Natural killer cell (primary cell): ENCODE measurements at regions of chr3 and their contacts with region 1.

Region 1: GRCh38 chr3:73907582-73907981 is 282.8 kb upstream of the PDZRN3 start:
- DNase-seq: no peak
- ATAC-seq: no peak
- H3K4me3 ChIP-seq: no peak overlapping the region
- H3K4me3 Mint-ChIP-seq: no peak overlapping the region
- H3K27ac ChIP-seq: no peak overlapping the region
- H3K27ac Mint-ChIP-seq: no peak overlapping the region
- H3K4me1 ChIP-seq: no peaks in the 10 kb centered on the region
- H3K4me1 Mint-ChIP-seq: no peaks in the 10 kb centered on the region
- H3K27me3 ChIP-seq: no peaks in the 10 kb centered on the region
- H3K27me3 Mint-ChIP-seq: no peaks in the 10 kb centered on the region
- CTCF ChIP-seq: no peak

Region 2: DNA sequence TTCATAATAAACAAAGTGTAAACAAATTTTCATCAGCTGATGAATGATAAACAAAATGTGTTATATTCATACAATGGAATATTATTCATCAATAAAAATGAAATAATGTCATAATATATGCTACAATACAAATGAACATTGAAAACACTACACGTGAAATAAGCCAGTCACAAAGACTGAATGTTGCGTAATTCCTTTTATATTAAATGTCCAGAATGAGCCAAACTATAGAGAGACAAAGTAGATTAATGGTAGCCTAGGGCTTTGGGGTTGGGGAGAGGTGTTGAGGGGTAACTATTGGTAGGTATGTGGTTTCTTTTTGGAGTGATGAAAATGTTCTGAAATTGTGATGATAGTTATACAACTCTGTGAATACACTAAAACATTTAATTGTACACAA is 10.1 kb after region 1 on chr3:
- intact Hi-C with region 1: loop called (anchors 1 kb)
- DNase-seq: no peak
- ATAC-seq: no peak
- H3K4me3 ChIP-seq: no peak overlapping the region
- H3K4me3 Mint-ChIP-seq: no peak overlapping the region
- H3K27ac ChIP-seq: no peak overlapping the region
- H3K27ac Mint-ChIP-seq: no peak overlapping the region
- H3K4me1 ChIP-seq: no peaks in the 10 kb centered on the region
- H3K4me1 Mint-ChIP-seq: no peaks in the 10 kb centered on the region
- H3K27me3 ChIP-seq: no peaks in the 10 kb centered on the region
- H3K27me3 Mint-ChIP-seq: no peaks in the 10 kb centered on the region
- CTCF ChIP-seq: no peak